Psoas muscle (tissue), 8 donors: ENCODE measurements at regions of chr4 and their contacts with region 1.

Region 1: GRCh38 chr4:68271851-68272756 is 26.6 kb upstream of the TMPRSS11B start:
- DNase-seq: no peak
- ATAC-seq: peak in 2 of 4 donors; percentile 72 to 82
- H3K4me3 ChIP-seq: peak overlapping the region; percentile 37
- H3K27ac ChIP-seq: no peak overlapping the region
- H3K4me1 ChIP-seq: no peaks in the 10 kb centered on the region
- H3K27me3 ChIP-seq: peaks cover 0 to 4% (median 0%) of the 10 kb centered on the region in 3 donors
- CTCF ChIP-seq: peak; percentile 81

Region 2: GRCh38 chr4:68375667-68376559 is 103.8 kb after region 1 on chr4:
- intact Hi-C with region 1: loop called (anchors 1 to 2 kb)
- DNase-seq: no peak
- ATAC-seq: peak; percentile 57 to 74 (median 64)
- H3K4me3 ChIP-seq: no peak overlapping the region
- H3K27ac ChIP-seq: no peak overlapping the region
- H3K4me1 ChIP-seq: peaks cover 3% of the 10 kb centered on the region
- H3K27me3 ChIP-seq: peaks cover 2 to 31% (median 9%) of the 10 kb centered on the region in 3 donors
- CTCF ChIP-seq: peak; percentile 89

Region 3: DNA sequence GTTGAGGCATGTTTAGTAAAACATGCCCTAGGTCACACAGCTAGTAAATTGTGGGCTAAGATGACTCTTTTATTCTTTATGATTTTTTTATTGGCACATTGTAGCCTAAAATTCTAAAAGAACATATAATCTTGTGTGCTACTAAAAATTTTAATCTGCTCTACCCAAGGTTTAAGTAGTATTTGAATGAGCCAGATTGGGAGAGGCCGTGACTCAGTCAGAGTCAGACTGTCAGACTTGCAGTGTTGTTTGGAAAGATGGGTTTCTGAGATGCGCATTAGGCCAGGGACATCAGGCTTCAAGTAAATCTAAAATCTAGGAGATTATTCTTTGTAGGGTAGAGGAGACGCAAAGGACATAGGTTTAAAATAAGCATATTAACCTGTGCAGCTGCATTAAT is 144.5 kb after region 1 on chr4:
- intact Hi-C with region 1: no loop called
- DNase-seq: no peak
- ATAC-seq: no peak
- H3K4me3 ChIP-seq: no peak overlapping the region
- H3K27ac ChIP-seq: no peak overlapping the region
- H3K4me1 ChIP-seq: no peaks in the 10 kb centered on the region
- H3K27me3 ChIP-seq: no peaks in the 10 kb centered on the region
- CTCF ChIP-seq: no peak